Activated CD4-positive, alpha-beta T cell treated with anti-CD3 and anti-CD28 coated beads, Interleukin-2, amount 10 ng/mL, durations not matched to agents 7 days and 5 days (primary cell): ENCODE measurements at regions of chr20 and their contacts with region 1.

Region 1: GRCh38 chr20:62937366-62938104 is 412 bp upstream of the GID8 start:
- DNase-seq: peak; percentile 97
- H3K4me3 Mint-ChIP-seq: no peak overlapping the region
- H3K27ac Mint-ChIP-seq: peak overlapping the region; percentile 92
- H3K4me1 Mint-ChIP-seq: peaks cover 35% of the 10 kb centered on the region
- H3K27me3 Mint-ChIP-seq: no peaks in the 10 kb centered on the region

Region 2: DNA sequence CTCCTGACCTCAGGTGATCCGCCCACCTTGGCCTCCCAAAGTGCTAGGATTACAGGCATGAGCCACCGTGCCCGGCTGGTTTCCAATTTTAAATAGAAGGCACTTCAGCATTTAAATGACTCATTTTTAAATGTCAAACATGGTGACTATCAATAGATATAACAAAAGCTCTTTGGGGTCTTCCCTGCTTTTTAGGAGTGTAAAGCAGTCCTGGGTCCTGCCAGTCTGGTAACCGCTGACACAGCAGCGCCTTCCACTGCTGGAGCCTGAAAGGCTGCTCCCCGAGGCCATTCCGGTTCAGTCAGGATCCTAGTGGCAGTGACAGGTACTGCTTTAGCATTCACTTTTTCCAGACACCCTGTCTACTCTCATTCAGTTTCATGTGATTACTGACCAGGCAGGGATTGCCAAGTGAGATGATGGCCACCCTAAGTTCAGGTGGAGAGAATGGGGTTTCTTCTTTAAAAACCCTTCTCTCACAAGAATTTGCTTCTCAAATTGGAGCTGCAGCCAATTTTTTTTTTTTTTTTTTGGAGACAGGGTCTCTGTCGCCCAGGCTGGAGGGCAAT is 16.3 kb before region 1 on chr20:
- CTCF ChIA-PET with region 1: interaction called, 26 read pairs
- POLR2A ChIA-PET with region 1: interaction called, 4 read pairs
- DNase-seq: peak; percentile 76
- H3K4me3 Mint-ChIP-seq: peak overlapping the region; percentile 67
- H3K27ac Mint-ChIP-seq: peak overlapping the region; percentile 85
- H3K4me1 Mint-ChIP-seq: peaks cover 79% of the 10 kb centered on the region
- H3K27me3 Mint-ChIP-seq: no peaks in the 10 kb centered on the region

Region 3: GRCh38 chr20:62926239-62927104 is 11.1 kb before region 1 on chr20 and contains the start of gene DIDO1:
- CTCF ChIA-PET with region 1: interaction called, 26 read pairs
- POLR2A ChIA-PET with region 1: interaction called, 4 read pairs
- DNase-seq: peak; percentile 88
- H3K4me3 Mint-ChIP-seq: peak within 1 kb of the TSS; percentile 94
- H3K27ac Mint-ChIP-seq: peak within 1 kb of the TSS; percentile 92
- H3K4me1 Mint-ChIP-seq: peaks cover 69% of the 10 kb centered on the region
- H3K27me3 Mint-ChIP-seq: no peaks in the 10 kb centered on the region
- total RNA-seq, gene DIDO1: 78.3 to 79.4 TPM

Region 4: GRCh38 chr20:63042448-63043071 is 105.0 kb after region 1 on chr20:
- CTCF ChIA-PET with region 1: no interaction called
- POLR2A ChIA-PET with region 1: no interaction called
- DNase-seq: no peak
- H3K4me3 Mint-ChIP-seq: no peak overlapping the region
- H3K27ac Mint-ChIP-seq: no peak overlapping the region
- H3K4me1 Mint-ChIP-seq: no peaks in the 10 kb centered on the region
- H3K27me3 Mint-ChIP-seq: peaks cover 22% of the 10 kb centered on the region